PC-9 (cell line): ENCODE measurements at regions of chr11 and their contacts with region 1.

Region 1: GRCh38 chr11:72069787-72070251 is 10.5 kb downstream of the NUMA1 start:
- DNase-seq: peak; percentile 84 to 87
- H3K4me3 ChIP-seq: peak overlapping the region; percentile 35; the same call in 1 of the 2 replicates
- H3K27ac ChIP-seq: peak overlapping the region; percentile 83
- H3K4me1 ChIP-seq: peaks cover 57% of the 10 kb centered on the region
- H3K27me3 ChIP-seq: no peaks in the 10 kb centered on the region
- CTCF ChIP-seq: no peak

Region 2: GRCh38 chr11:71999798-72000197 is 70.0 kb before region 1 on chr11:
- CTCF ChIA-PET with region 1: no interaction called
- POLR2A ChIA-PET with region 1: interaction called, 18 read pairs
- intact Hi-C with region 1: no loop called
- DNase-seq: no peak
- H3K4me3 ChIP-seq: no peak overlapping the region
- H3K27ac ChIP-seq: no peak overlapping the region
- H3K4me1 ChIP-seq: no peaks in the 10 kb centered on the region
- H3K27me3 ChIP-seq: no peaks in the 10 kb centered on the region
- CTCF ChIP-seq: no peak

Region 3: DNA sequence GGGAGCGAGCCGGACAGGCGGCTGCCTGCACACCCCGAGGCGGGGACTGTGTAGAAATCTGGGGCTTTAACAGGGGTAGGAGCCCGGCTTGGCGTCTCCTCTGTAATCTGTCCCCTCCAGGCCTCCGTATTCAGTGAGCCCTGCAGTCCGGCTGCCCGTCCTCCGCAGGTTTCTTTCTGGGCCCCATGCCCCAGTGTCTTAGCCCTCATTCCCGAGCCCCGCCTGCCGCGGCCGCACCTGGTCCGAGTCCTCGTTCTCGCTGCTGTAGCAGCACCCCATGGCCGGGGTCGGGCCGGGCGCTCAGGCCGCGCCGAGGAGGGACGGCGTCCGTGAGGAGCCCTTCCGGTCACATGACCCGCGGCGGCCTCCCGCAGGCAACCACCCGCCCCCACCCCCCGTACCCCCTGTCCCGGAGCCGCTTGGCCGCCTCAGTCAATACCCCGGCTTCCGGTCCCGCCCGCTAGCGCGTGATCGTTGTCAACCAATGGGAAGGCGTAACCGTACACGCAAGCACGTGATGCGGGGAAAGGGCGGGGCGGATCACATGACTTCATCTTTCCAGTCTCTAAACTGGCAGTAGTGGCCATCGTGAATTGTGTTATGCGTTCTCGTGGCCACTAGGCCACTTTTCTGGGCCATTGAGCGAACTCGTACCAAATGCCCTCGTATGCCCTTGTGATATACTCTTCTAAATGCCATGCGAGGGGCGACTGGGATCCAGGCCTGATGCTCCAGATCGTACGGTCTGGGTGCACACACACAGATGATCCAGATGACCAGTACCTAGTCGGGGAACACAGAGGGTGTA is 33.3 kb after region 1 on chr11 and contains the start of gene LAMTOR1:
- CTCF ChIA-PET with region 1: no interaction called
- POLR2A ChIA-PET with region 1: no interaction called
- intact Hi-C with region 1: loop called (anchors 1 kb)
- DNase-seq: peak; percentile 96 to 98
- H3K4me3 ChIP-seq: peak within 1 kb of the TSS; percentile 95
- H3K27ac ChIP-seq: peak within 1 kb of the TSS; percentile 71
- H3K4me1 ChIP-seq: peaks cover 13% of the 10 kb centered on the region
- H3K27me3 ChIP-seq: no peaks in the 10 kb centered on the region
- CTCF ChIP-seq: peak; percentile 68; the same call in 1 of the 2 replicates
- total RNA-seq, gene LAMTOR1: 94.6 and 107 TPM in 2 replicates

Region 4: DNA sequence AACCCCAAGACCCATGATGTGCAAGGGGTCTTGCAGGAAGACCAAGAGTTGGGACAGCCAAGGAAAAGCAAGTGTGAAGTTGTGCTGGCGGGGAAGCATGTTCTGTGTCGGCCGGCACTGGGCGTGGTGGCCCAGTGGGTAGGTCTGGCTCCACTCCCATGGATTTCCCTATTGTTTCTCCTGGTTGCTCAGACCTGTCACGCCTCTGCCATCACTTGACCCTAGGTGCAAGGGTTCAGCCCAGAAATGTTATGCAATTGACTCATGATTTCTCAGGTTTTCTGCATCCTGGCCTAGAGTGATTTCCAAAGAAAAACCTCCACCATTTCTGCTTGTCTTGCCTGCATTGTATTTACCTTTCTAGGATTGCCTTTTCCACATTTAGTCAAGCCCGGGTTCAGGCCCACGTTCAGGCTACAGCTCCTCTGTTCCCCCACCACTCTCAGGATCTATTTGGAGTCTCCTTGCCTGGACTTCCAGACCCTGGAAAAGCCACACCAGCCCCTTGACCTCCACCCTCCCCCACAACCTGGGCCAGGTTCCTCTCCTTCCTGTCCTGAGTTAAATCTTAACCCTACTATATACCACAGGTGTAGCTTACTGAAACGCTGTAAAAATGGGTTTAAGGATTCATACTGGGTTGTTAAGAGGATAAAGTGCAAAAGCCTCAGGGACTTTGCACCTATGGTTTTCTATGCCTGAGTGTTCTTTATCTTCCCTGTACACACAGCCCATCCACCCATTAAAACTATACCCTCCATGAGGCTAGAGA is 104.7 kb after region 1 on chr11:
- CTCF ChIA-PET with region 1: no interaction called
- POLR2A ChIA-PET with region 1: no interaction called
- intact Hi-C with region 1: no loop called
- DNase-seq: peak in 1 of 2 experiments; percentile 9
- H3K4me3 ChIP-seq: no peak overlapping the region
- H3K27ac ChIP-seq: no peak overlapping the region
- H3K4me1 ChIP-seq: no peaks in the 10 kb centered on the region
- H3K27me3 ChIP-seq: peaks cover 9% of the 10 kb centered on the region; the same call in 1 of the 2 replicates
- CTCF ChIP-seq: no peak

Region 5: DNA sequence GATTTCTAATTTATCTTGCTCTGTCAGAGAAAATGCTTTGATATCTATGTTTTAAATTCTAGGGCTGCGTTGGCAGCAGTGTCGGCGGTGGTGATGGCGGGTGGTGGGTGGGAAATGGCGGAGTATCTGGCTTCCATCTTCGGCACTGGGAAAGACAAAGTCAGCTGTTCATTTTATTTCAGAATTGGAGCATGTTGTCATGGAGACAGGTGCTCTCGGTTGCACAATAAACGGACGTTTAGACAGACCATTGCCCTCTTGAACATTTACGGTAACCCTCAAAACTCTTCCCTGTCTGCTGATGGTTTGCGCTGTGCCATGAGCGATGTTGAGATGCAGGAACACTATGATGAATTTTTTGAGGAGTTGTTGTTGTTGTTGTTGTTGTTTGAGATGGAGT is 210.2 kb after region 1 on chr11:
- CTCF ChIA-PET with region 1: no interaction called
- POLR2A ChIA-PET with region 1: no interaction called
- intact Hi-C with region 1: no loop called
- DNase-seq: no peak
- H3K4me3 ChIP-seq: no peak overlapping the region
- H3K27ac ChIP-seq: no peak overlapping the region
- H3K4me1 ChIP-seq: 0 out of 2 replicates have a peak, but pooled peaks cover 8% of the 10 kb centered on the region
- H3K27me3 ChIP-seq: peaks cover 5% of the 10 kb centered on the region; the same call in 1 of the 2 replicates
- CTCF ChIP-seq: no peak